T-cell (primary cell): ENCODE measurements at regions of chr16 and their contacts with region 1.

Region 1: DNA sequence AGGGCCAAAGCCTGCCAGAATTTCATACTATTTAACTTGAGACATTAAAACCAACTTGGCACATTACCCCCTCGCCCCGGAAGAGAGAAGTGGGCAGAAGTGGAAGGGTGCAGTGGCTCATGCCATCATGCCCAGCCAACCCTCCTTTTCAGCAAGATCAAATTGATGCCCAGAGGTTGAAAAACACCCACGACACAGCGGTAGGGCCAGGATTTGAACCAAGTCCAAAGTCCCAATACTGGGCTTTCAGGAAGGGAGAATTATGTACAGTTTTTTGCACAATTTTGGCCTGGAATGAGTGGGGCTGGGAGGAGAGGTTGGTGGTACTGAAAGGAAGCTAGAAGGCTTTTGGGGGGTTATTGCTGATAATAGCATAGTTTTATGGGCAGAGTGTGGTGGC is 11.0 kb downstream of the PDP2 start:
- DNase-seq: no peak
- ATAC-seq: no peak
- H3K4me3 ChIP-seq: no peak overlapping the region
- H3K4me3 Mint-ChIP-seq: no peak overlapping the region
- H3K27ac ChIP-seq: no peak overlapping the region
- H3K27ac Mint-ChIP-seq: no peak overlapping the region
- H3K4me1 ChIP-seq: peaks cover 0 to 10% of the 10 kb centered on the region in 2 experiments
- H3K4me1 Mint-ChIP-seq: peaks cover 6 to 23% (median 23%) of the 10 kb centered on the region in 3 donors
- H3K27me3 ChIP-seq: peaks cover 0 to 2% of the 10 kb centered on the region in 2 experiments
- H3K27me3 Mint-ChIP-seq: no peaks in the 10 kb centered on the region

Region 2: DNA sequence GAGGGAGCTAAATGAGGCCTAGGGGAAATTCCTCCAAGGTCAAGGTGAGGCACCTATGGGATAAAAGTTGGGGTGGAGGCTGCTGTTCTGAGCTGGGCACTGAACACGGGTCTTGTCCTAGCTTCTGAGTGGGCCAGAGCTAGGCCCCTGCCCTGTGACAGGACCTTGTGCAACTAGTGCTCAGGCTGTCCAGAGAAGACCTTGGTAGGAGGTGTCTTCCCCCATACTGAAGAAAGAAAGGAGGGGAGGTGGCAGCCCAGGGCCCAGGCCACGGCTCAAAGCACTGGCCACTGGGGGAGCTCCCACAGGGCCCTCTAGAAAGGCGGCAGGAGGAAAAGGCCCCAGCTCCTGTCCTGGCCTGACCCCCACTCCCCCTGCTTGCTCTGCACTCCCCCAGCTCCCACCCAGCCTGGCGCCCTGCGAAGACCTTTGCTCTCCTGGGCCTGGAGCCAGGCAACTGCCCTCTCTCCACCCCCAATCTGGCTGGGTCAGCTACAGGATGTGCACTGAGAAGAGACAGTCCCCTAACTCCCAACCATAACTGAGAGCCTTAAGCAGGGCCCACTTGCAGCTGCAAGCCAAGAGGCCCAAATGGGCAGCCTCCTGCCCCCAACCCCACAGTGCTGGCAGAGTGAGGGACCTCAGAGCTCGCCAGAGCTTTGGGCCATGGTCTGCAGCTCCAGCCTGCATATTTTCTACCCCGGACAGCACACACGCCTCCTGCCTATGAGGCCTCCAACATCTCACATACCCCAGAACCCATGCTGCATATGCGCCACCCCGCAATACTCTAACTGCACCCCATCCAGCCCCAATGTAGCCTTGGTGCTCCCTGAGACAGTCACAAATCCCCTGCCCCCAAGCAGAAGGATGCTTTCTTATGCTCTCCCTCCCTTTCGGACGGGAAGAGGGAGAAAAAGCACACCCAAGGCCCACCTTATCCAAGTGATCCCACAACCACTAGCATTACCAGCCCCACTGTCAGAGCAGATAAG is 554.9 kb after region 1 on chr16:
- CTCF ChIA-PET with region 1: interaction called in 1 of 2 experiments, 10 read pairs
- POLR2A ChIA-PET with region 1: no interaction called
- DNase-seq: no peak
- ATAC-seq: no peak
- H3K4me3 ChIP-seq: no peak overlapping the region
- H3K4me3 Mint-ChIP-seq: no peak overlapping the region
- H3K27ac ChIP-seq: no peak overlapping the region
- H3K27ac Mint-ChIP-seq: no peak overlapping the region
- H3K4me1 ChIP-seq: peaks cover 0 to 4% of the 10 kb centered on the region in 2 experiments
- H3K4me1 Mint-ChIP-seq: peaks cover 0 to 12% (median 0%) of the 10 kb centered on the region in 3 donors
- H3K27me3 ChIP-seq: no peaks in the 10 kb centered on the region
- H3K27me3 Mint-ChIP-seq: no peaks in the 10 kb centered on the region